Psoas muscle (tissue), 8 donors: ENCODE measurements at regions of chr15 and their contacts with region 1.

Region 1: DNA sequence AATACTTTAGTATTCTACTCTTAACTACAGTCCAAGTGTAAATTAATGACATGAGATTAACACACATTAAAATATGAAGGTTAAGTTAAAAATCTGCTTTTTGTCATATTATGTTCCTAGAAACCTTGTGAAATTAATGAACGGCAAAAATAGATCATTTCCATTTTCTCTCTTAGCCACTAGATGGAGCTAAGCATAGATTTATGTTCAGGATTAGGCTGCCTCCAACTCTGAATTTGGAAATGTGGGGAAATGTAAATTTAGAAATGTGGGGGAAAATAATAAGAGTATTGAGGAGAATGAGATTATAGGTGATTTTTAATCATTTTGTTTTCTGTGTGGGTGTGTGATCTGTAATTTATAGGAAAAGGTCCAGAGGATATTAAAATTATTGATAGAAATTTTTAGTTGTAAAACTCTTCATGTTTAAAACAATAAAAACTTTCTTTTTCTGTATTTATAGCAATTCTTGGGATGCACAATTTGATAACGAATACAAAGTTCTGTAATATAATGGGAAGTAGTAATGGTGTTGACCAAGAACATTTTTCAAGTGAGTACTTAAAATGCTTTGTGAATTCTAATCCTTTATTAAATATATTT is 59.2 kb downstream of the TMOD3 start:
- DNase-seq: no peak
- ATAC-seq: peak in 2 of 4 donors; percentile 47 to 62
- H3K4me3 ChIP-seq: no peak overlapping the region
- H3K27ac ChIP-seq: no peak overlapping the region
- H3K4me1 ChIP-seq: no peaks in the 10 kb centered on the region
- H3K27me3 ChIP-seq: no peaks in the 10 kb centered on the region
- CTCF ChIP-seq: peak; percentile 71

Region 2: DNA sequence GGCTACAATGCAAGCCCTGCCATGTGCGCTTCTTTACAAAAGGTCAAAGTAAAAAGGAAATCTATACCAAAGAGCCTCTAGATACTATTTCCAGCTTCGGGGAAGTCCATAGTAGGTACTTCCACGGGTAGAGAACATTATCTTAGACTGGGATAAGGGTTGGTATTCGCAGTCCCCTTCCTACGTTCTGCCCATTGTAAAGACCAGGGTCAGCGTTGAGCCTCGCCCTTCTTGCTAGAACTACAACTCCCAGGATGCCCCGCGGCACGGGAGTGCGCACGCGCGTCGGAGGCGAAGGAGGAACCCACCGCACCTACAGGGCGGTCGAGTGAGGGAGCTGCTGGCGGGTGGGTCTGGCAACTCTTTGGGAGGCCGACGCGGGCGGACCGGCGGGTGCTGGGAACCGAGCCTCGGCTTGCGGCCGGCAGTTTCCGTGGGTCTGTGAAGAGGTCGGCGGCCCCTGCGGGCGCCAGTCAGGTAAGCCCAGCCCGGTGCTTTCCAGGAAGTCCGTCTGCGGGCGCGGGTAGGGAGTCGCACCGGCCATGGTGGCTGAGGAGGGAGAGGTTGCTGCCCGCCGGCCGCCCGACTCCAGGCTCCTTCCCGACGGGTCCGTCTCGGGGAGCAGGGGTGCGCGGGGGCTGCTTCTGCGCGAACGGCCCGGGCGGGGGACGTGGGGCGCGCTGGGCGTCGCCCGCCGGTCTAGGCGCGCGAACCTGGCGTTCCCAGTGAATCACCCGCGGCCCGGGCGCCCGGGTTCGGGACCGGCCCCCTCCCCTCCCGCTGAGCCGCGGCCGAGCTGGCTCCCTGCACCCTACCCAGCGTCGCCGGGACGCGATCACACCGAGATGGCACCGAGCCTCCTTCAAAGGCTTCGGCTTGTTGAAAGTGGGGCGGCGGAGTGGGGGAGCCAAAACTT is 59.1 kb before region 1 on chr15 and contains the start of gene TMOD3:
- intact Hi-C with region 1: loop called in 1 of 2 experiments (anchors 10 kb)
- DNase-seq: peak; percentile 92 to 95
- ATAC-seq: peak; percentile 98 to 100 (median 99)
- H3K4me3 ChIP-seq: peak within 1 kb of the TSS; percentile 98
- H3K27ac ChIP-seq: peak within 1 kb of the TSS; percentile 86
- H3K4me1 ChIP-seq: peaks cover 32% of the 10 kb centered on the region
- H3K27me3 ChIP-seq: no peaks in the 10 kb centered on the region
- CTCF ChIP-seq: no peak
- total RNA-seq, gene TMOD3: 6.4 to 22.6 (median 7.9) TPM

Region 3: GRCh38 chr15:52078876-52079700 is 190.4 kb after region 1 on chr15:
- intact Hi-C with region 1: loop called in 1 of 2 experiments (anchors 10 kb)
- DNase-seq: peak; percentile 75 to 90
- ATAC-seq: peak; percentile 69 to 90 (median 78)
- H3K4me3 ChIP-seq: no peak overlapping the region
- H3K27ac ChIP-seq: no peak overlapping the region
- H3K4me1 ChIP-seq: no peaks in the 10 kb centered on the region
- H3K27me3 ChIP-seq: no peaks in the 10 kb centered on the region
- CTCF ChIP-seq: peak; percentile 78

Region 4: DNA sequence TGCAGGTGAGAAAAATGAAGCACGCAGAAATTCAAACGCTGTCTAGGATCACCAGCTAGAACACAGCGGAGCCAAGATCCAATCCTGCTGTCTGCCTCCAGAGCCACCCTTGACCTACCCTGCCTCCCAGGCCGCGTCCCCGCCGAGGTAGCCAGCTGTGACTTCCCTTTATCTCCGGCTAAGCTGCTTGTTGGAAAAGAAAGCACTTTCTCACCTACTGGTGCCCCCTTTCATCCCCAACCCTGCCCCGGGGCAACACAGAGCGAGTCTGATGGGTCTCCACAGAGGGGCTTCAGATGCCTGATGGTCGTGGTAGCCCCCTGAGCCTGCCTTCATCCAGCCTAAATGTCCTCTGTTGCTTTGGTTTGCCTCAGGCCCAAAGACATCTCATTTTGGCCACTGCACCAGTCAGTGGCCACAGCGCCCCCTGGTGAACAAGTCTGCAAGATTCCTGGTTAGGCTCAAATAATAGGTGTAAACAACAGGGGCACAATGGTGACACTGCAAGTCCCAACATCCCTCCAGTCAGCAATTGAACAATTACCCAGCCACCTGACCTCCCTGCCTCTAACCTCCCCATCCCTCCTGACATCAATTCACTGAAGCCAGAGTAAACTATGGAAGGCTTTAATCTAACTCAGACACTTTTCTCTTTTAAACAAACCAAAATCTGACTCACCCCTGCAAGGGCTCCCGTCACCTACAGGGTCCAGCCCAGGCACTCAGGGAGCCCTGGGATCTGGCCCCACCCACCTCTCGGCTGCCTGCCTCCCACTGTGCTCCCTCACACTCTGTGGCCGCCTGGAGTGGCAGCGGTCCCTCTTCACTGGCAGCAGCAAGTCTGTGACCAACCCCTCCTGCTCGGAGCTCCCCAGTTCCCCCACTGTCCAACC is 251.2 kb after region 1 on chr15:
- intact Hi-C with region 1: loop called in 1 of 2 experiments (anchors 10 kb)
- DNase-seq: peak; percentile 72 to 81
- ATAC-seq: peak; percentile 40 to 70 (median 60)
- H3K4me3 ChIP-seq: no peak overlapping the region
- H3K27ac ChIP-seq: no peak overlapping the region
- H3K4me1 ChIP-seq: no peaks in the 10 kb centered on the region
- H3K27me3 ChIP-seq: no peaks in the 10 kb centered on the region
- CTCF ChIP-seq: peak; percentile 71

Region 5: GRCh38 chr15:52208306-52208946 is 319.7 kb after region 1 on chr15:
- intact Hi-C with region 1: no loop called
- DNase-seq: peak in 1 of 2 donors; percentile 42
- ATAC-seq: peak in 3 of 4 donors; percentile 40 to 52 (median 45)
- H3K4me3 ChIP-seq: no peak overlapping the region
- H3K27ac ChIP-seq: no peak overlapping the region
- H3K4me1 ChIP-seq: no peaks in the 10 kb centered on the region
- H3K27me3 ChIP-seq: no peaks in the 10 kb centered on the region
- CTCF ChIP-seq: peak; percentile 41

Region 6: GRCh38 chr15:52227456-52227855 is 338.8 kb after region 1 on chr15:
- intact Hi-C with region 1: loop called in 1 of 2 experiments (anchors 10 kb)
- DNase-seq: peak in 1 of 2 donors; percentile 50
- ATAC-seq: peak; percentile 87 to 95 (median 91)
- H3K4me3 ChIP-seq: no peak overlapping the region
- H3K27ac ChIP-seq: no peak overlapping the region
- H3K4me1 ChIP-seq: no peaks in the 10 kb centered on the region
- H3K27me3 ChIP-seq: no peaks in the 10 kb centered on the region
- CTCF ChIP-seq: peak; percentile 81